GM12878 (cell line): ENCODE measurements at regions of chr11 and their contacts with region 1.

Region 1: DNA sequence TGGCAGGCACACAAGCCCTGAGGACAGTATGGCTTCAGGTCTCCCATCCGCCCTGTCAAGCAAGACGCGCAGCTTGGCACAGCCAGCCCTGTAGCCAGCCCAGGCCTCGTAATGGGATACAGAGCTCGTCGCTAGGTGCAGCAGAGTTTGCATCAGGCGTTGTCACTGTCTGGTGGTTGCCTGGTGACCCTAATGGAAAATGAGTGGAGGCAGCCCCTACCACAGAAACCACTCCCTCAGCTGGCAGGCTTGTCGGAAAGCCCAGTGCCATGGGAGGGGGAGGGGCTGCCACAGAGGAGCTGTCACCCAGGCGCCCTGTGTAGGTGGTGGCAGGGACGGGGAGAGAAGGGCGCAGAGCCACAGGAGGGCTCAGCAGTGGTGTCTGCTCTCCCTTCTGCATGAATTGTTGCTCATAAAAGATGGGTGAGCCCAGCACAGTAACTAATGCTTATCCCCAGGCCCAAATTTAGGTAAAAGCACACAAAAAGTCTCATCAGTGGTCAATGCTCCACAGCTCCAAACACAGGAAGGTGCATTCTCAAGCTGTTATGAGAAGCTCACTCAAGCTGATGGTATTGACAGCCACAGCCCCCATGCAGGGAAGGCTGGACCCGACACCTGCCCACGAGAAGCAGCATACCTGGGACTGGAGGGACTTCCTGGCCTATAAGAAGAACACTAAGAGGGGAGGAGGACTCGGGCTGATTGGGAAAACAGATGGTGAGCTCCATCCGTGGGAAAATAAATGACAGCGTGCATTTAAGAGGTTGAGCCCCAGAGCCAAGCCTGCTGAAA is 164.6 kb downstream of the ETS1 start:
- DNase-seq: no peak
- ATAC-seq: peak; percentile 76
- H3K4me3 ChIP-seq: no peak overlapping the region
- H3K27ac ChIP-seq: no peak overlapping the region
- H3K4me1 ChIP-seq: no peaks in the 10 kb centered on the region
- H3K27me3 ChIP-seq: no peaks in the 10 kb centered on the region
- CTCF ChIP-seq: no peak
- EP300 ChIP-seq: no peak
- POLR2A ChIP-seq: peak; percentile 36; the same call in 1 of the 2 replicates
- RAD21 ChIP-seq: no peak

Region 2: GRCh38 chr11:128399251-128400121 is 23.3 kb before region 1 on chr11:
- CTCF ChIA-PET with region 1: no interaction called
- POLR2A ChIA-PET with region 1: no interaction called
- RAD21 ChIA-PET with region 1: interaction called, 3 read pairs
- SMC1A ChIA-PET with region 1: interaction called, 59 read pairs
- in situ Hi-C with region 1: no loop called
- intact Hi-C with region 1: no loop called
- DNase-seq: peak; percentile 26
- ATAC-seq: peak; percentile 93
- H3K4me3 ChIP-seq: no peak overlapping the region
- H3K27ac ChIP-seq: no peak overlapping the region; the same call in 1 of the 2 replicates
- H3K4me1 ChIP-seq: peaks cover 8% of the 10 kb centered on the region
- H3K27me3 ChIP-seq: no peaks in the 10 kb centered on the region
- CTCF ChIP-seq: no peak
- EP300 ChIP-seq: 0 out of 4 replicates have a peak, but pooled peaks of 1 of the 2 experiments have one; percentile 31
- POLR2A ChIP-seq: no peak
- RAD21 ChIP-seq: no peak